T-cell (primary cell): ENCODE measurements at regions of chr11 and their contacts with region 1.

Region 1: DNA sequence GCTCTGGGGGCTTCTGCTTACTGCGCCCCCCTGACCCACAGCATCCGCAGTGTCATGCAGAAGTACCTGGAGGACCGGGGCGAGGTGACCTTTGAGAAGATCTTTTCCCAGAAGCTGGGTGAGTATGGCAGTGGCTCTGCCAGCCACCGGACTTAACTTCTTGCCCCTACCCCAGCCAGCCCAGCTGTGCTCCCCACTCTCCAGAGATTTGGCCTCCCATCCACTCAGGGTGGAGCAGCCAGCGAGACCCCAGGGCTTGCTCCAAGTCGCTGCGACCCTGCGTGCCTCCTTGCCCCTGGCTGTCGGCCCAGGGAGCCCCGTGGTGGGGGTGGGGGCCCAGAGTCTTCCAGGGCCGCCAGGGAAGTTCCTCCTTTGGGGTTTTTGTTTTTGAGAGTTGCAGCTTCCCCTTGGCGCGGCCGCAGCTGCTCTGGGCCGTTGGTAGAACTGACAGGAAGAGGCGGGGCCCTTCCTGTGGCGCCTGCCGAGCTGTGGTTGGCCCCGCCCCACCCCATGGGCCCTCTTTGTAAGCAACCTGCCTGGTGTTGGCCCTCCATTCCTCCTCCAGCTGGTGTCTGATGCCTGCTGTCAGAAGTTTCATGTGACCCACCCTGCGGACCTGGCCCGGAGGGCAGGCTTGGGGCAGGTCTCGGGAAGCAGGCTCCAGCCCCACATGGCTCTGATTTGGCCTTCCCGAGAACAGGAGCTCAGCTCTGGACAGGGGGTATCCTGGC is 11.1 kb downstream of the GRK2 start:
- DNase-seq: peak; percentile 80 to 97 (median 93)
- ATAC-seq: peak; percentile 92 to 94 (median 93)
- H3K4me3 ChIP-seq: peak overlapping the region; percentile 49 to 58
- H3K4me3 Mint-ChIP-seq: peak overlapping the region; percentile 70 to 99 (median 77)
- H3K27ac ChIP-seq: peak overlapping the region; percentile 91
- H3K27ac Mint-ChIP-seq: peak overlapping the region; percentile 98 to 99
- H3K4me1 ChIP-seq: peaks cover 56 to 100% of the 10 kb centered on the region in 2 experiments
- H3K4me1 Mint-ChIP-seq: peaks cover 71 to 85% (median 81%) of the 10 kb centered on the region in 3 donors
- H3K27me3 ChIP-seq: no peaks in the 10 kb centered on the region
- H3K27me3 Mint-ChIP-seq: no peaks in the 10 kb centered on the region

Region 2: GRCh38 chr11:67250059-67251043 is 27.0 kb before region 1 on chr11:
- CTCF ChIA-PET with region 1: no interaction called
- POLR2A ChIA-PET with region 1: no interaction called
- DNase-seq: peak in 1 of 35 experiments; percentile 8
- ATAC-seq: no peak
- H3K4me3 ChIP-seq: no peak overlapping the region
- H3K4me3 Mint-ChIP-seq: no peak overlapping the region
- H3K27ac ChIP-seq: no peak overlapping the region
- H3K27ac Mint-ChIP-seq: no peak overlapping the region
- H3K4me1 ChIP-seq: peaks cover 0 to 14% of the 10 kb centered on the region in 2 experiments
- H3K4me1 Mint-ChIP-seq: peaks cover 61 to 74% (median 62%) of the 10 kb centered on the region in 3 donors
- H3K27me3 ChIP-seq: no peaks in the 10 kb centered on the region
- H3K27me3 Mint-ChIP-seq: no peaks in the 10 kb centered on the region

Region 3: DNA sequence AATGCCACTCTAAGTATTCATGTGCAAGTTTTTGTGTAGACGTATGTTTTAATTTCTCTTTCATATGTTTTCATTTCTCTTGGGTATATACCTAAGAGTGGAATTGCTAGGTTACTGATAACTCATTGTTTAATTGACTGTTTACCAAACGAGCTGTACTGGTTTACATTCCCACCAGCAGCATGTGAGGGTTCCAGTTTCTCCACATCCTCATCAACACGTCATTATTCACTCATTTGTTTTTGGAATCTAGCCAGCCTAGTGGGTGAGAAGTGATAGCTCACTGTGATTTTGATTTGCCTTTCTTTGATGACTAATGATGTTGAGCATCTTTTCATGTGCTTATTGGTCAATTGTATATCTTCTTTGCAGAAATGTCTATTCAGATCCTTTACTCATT is 15.7 kb after region 1 on chr11:
- CTCF ChIA-PET with region 1: interaction called, 8 to 13 read pairs
- POLR2A ChIA-PET with region 1: no interaction called
- DNase-seq: peak in 2 of 35 experiments; percentile 49 to 70
- ATAC-seq: no peak
- H3K4me3 ChIP-seq: no peak overlapping the region
- H3K4me3 Mint-ChIP-seq: peak overlapping the region; percentile 8 to 45 (median 32)
- H3K27ac ChIP-seq: peak overlapping the region; percentile 62
- H3K27ac Mint-ChIP-seq: peak overlapping the region; percentile 60 to 82
- H3K4me1 ChIP-seq: peaks cover 10 to 38% of the 10 kb centered on the region in 2 experiments
- H3K4me1 Mint-ChIP-seq: peaks cover 49 to 56% (median 52%) of the 10 kb centered on the region in 3 donors
- H3K27me3 ChIP-seq: no peaks in the 10 kb centered on the region
- H3K27me3 Mint-ChIP-seq: no peaks in the 10 kb centered on the region